Sciatic nerve (tissue), 2 donors: ENCODE measurements at regions of chr13 and their contacts with region 1.

Region 1: DNA sequence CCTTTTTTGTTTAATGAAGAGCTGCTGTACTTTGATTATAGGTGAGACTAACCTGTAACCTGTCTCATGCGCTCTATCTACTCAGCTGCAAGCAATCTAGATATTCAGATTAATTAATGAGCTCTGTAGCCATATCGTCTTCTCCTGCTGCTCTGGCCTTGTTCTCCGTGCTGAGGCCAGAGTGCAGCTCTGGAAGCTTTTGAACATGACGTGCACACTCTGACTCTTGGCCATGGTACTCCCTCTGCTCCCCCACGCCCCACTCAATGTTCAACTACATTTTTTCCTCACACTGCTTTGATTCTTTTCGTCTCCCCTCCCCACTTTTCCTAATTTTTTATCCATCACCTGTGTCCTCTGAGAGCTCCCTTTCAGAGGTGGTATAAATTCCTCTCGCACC is 751.8 kb downstream of the FGF9 start:
- DNase-seq: no peak
- ATAC-seq: no peak

Region 2: DNA sequence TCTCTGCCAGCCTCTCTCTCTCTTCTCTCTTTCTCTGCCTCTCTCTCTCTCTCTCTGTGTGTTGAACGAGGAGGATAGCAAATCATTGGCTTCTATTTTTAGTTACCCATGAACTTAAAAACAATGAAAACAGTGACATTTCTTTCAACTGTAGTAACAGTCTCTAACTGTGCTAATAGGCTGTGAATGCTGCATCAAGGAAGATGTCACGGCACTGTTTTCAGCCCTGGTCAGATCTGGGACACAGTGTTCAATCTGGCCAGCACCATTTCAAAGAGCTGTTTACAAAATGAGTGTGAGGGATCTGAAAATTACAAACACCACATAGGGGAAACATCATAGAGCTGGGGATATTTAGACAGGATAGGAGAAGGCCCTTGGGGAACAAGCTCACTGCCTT is 34.8 kb before region 1 on chr13:
- intact Hi-C with region 1: loop called (anchors 1 kb)
- DNase-seq: no peak
- ATAC-seq: no peak

Region 3: GRCh38 chr13:22451327-22451741 is 28.6 kb after region 1 on chr13:
- intact Hi-C with region 1: no loop called
- DNase-seq: no peak
- ATAC-seq: peak; percentile 94